Activated CD8-positive, alpha-beta T cell treated with anti-CD3 and anti-CD28 coated beads for 36 hours (primary cell): ENCODE measurements at regions of chr17 and their contacts with region 1.

Region 1: DNA sequence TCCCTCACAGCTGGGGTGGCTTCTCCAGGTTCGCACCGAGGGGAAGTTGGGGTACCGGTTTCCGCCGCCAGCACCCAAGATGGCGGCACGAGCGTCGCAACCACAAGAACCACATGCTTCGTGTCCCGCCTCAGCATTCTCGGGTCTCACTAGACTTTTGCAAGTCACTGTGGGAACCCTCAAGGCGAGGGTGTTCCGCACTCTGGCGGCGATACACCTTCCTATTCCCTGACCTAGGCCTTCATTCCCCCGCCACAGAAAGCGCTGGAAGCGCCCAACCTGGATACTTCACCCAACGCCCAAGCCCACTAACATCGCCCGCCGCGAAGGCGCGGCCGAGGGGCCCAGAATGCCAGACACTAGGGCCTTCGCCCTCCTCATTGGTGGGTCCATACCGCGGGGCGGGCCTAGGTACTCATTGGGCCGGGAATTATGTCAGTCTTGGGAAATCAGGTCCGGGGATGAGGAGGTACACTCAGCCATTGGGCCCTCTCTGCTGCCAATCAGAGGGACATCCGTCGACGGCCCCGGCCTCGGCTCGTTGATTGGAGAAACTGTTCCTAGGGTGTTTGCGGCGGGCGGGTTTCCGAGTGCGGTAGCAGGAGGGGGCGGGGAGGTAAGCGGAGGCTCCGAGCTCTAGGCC is at the start of gene NFE2L1:
- DNase-seq: peak; percentile 100
- ATAC-seq: peak; percentile 97
- H3K4me3 Mint-ChIP-seq: peak within 1 kb of the TSS; percentile 96
- H3K27ac Mint-ChIP-seq: peak within 1 kb of the TSS; percentile 98
- H3K4me1 Mint-ChIP-seq: peaks cover 57% of the 10 kb centered on the region
- H3K27me3 Mint-ChIP-seq: no peaks in the 10 kb centered on the region
- CTCF ChIP-seq: no peak
- total RNA-seq, gene NFE2L1: 88.3 to 90.3 TPM

Region 2: GRCh38 chr17:48037036-48037837 is 10.6 kb before region 1 on chr17 and contains the start of gene COPZ2:
- CTCF ChIA-PET with region 1: interaction called, 33 read pairs
- POLR2A ChIA-PET with region 1: interaction called, 26 read pairs
- intact Hi-C with region 1: no loop called
- DNase-seq: peak; percentile 74
- ATAC-seq: peak; percentile 92
- H3K4me3 Mint-ChIP-seq: peak within 1 kb of the TSS; percentile 72
- H3K27ac Mint-ChIP-seq: peak within 1 kb of the TSS; percentile 58
- H3K4me1 Mint-ChIP-seq: peaks cover 8% of the 10 kb centered on the region
- H3K27me3 Mint-ChIP-seq: peaks cover 29% of the 10 kb centered on the region
- CTCF ChIP-seq: peak; percentile 83
- total RNA-seq, gene COPZ2: 4.3 to 4.6 TPM

Region 3: DNA sequence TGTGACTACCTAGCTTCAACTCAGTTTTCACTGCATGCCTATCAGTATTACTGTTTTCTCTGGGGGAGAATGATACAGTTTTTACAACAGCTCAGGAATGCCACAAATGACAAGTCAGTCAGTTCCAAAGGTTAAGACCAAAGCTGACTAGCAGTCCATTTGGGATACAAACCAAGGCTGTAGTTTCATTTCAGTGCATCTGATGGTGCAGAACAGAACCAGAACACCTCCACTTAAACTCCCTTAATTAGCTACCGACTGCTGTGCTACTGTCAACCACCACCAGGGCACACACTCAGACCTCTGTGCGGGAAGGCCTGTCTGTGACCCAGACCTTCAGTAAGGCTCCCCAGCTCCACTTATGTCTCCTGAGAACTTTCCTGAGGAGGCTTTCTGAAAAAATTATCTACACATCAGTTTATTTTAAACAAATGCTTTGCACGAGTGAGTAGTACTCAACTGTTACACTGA is 20.7 kb after region 1 on chr17:
- CTCF ChIA-PET with region 1: interaction called, 8 read pairs
- POLR2A ChIA-PET with region 1: interaction called, 20 read pairs
- intact Hi-C with region 1: no loop called
- DNase-seq: peak; percentile 38
- ATAC-seq: peak; percentile 61
- H3K4me3 Mint-ChIP-seq: no peak overlapping the region
- H3K27ac Mint-ChIP-seq: no peak overlapping the region
- H3K4me1 Mint-ChIP-seq: no peaks in the 10 kb centered on the region
- H3K27me3 Mint-ChIP-seq: no peaks in the 10 kb centered on the region
- CTCF ChIP-seq: peak; percentile 49

Region 4: DNA sequence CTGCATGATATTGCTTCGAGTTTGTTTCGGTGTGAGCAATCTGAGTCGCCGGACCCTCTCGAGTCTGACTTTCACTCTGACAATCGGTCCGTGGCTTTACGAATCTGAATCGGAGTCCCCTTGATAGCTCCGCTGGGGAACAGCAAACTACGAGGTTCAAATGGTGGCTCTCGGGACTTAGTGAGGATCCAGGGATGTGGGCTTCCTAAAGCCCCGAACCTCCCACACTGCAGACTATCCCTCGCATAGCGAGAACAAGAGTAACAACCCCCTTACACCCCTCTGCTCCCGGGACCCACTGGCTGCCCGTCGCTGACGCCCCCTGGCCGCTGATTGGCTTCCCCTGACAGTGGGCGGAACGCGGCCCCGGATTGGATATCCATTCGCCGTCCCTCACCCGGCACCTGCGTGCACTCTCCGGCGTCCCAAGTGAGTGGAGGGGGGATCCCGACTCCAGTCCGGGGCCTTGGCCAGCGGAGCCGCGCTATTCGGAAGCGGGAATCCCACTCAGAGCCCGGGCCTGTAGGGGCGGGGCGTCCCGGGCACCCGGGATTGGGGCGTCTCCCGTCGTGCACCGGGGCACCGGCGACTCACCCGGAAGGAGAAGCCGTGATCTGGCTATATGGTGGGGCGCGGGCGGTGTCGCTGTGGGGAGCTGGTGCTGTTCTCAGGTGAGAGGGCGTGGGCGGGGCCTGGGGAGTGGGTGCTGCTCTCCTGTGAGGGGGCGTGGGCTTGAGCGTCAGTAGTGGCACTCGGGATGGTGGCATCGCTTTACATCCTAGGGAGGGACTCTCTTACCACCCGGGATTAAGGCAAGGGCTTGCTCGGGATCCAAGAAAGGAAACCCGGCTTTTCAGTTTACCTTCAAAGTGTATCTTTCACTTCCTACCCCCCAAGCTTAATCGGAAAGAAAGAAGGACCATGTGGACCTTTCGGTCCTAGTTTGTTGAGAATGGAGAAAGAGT is 59.6 kb after region 1 on chr17 and contains the start of gene SNX11:
- CTCF ChIA-PET with region 1: interaction called, 4 read pairs
- POLR2A ChIA-PET with region 1: interaction called, 12 read pairs
- intact Hi-C with region 1: no loop called
- DNase-seq: peak; percentile 95
- ATAC-seq: peak; percentile 88
- H3K4me3 Mint-ChIP-seq: peak within 1 kb of the TSS; percentile 98
- H3K27ac Mint-ChIP-seq: peak within 1 kb of the TSS; percentile 98
- H3K4me1 Mint-ChIP-seq: peaks cover 54% of the 10 kb centered on the region
- H3K27me3 Mint-ChIP-seq: no peaks in the 10 kb centered on the region
- CTCF ChIP-seq: no peak
- total RNA-seq, gene SNX11: 27.2 to 29.5 TPM